Activated B cell treated with CpG ODN at 0.5 μM for 24 hours (primary cell): ENCODE measurements at regions of chr12 and their contacts with region 1.

Region 1: GRCh38 chr12:949453-950191 is at the start of gene RAD52:
- DNase-seq: peak; percentile 97
- ATAC-seq: peak; percentile 85
- H3K4me3 Mint-ChIP-seq: peak within 1 kb of the TSS; percentile 99
- H3K27ac Mint-ChIP-seq: peak within 1 kb of the TSS; percentile 96
- H3K4me1 Mint-ChIP-seq: peaks cover 26% of the 10 kb centered on the region
- H3K27me3 Mint-ChIP-seq: no peaks in the 10 kb centered on the region
- CTCF ChIP-seq: peak; percentile 65
- total RNA-seq, gene RAD52: 15.0 and 15.2 TPM in 2 replicates

Region 2: GRCh38 chr12:401235-402028 is 548.2 kb before region 1 on chr12 and contains the start of gene CCDC77:
- CTCF ChIA-PET with region 1: no interaction called
- POLR2A ChIA-PET with region 1: no interaction called
- intact Hi-C with region 1: loop called (anchors 1 kb)
- DNase-seq: peak; percentile 92
- ATAC-seq: peak; percentile 100
- H3K4me3 Mint-ChIP-seq: no peak within 1 kb of the TSS
- H3K27ac Mint-ChIP-seq: no peak within 1 kb of the TSS
- H3K4me1 Mint-ChIP-seq: no peaks in the 10 kb centered on the region
- H3K27me3 Mint-ChIP-seq: no peaks in the 10 kb centered on the region
- CTCF ChIP-seq: no peak
- total RNA-seq, gene CCDC77: 11.0 and 11.2 TPM in 2 replicates

Region 3: GRCh38 chr12:614411-614970 is 335.1 kb before region 1 on chr12:
- CTCF ChIA-PET with region 1: interaction called, 7 read pairs
- POLR2A ChIA-PET with region 1: no interaction called
- intact Hi-C with region 1: loop called (anchors 1 kb)
- DNase-seq: peak; percentile 38
- ATAC-seq: peak; percentile 73
- H3K4me3 Mint-ChIP-seq: no peak overlapping the region
- H3K27ac Mint-ChIP-seq: no peak overlapping the region
- H3K4me1 Mint-ChIP-seq: peaks cover 25% of the 10 kb centered on the region
- H3K27me3 Mint-ChIP-seq: no peaks in the 10 kb centered on the region
- CTCF ChIP-seq: no peak

Region 4: GRCh38 chr12:990661-991349 is 41.2 kb after region 1 on chr12 and contains the start of gene ERC1:
- CTCF ChIA-PET with region 1: interaction called, 4 read pairs
- POLR2A ChIA-PET with region 1: interaction called, 46 read pairs
- intact Hi-C with region 1: loop called (anchors 1 kb)
- DNase-seq: peak; percentile 94
- ATAC-seq: peak; percentile 89
- H3K4me3 Mint-ChIP-seq: peak within 1 kb of the TSS; percentile 95
- H3K27ac Mint-ChIP-seq: peak within 1 kb of the TSS; percentile 91
- H3K4me1 Mint-ChIP-seq: peaks cover 29% of the 10 kb centered on the region
- H3K27me3 Mint-ChIP-seq: no peaks in the 10 kb centered on the region
- CTCF ChIP-seq: no peak
- total RNA-seq, gene ERC1: 51.1 and 57.0 TPM in 2 replicates

Region 5: DNA sequence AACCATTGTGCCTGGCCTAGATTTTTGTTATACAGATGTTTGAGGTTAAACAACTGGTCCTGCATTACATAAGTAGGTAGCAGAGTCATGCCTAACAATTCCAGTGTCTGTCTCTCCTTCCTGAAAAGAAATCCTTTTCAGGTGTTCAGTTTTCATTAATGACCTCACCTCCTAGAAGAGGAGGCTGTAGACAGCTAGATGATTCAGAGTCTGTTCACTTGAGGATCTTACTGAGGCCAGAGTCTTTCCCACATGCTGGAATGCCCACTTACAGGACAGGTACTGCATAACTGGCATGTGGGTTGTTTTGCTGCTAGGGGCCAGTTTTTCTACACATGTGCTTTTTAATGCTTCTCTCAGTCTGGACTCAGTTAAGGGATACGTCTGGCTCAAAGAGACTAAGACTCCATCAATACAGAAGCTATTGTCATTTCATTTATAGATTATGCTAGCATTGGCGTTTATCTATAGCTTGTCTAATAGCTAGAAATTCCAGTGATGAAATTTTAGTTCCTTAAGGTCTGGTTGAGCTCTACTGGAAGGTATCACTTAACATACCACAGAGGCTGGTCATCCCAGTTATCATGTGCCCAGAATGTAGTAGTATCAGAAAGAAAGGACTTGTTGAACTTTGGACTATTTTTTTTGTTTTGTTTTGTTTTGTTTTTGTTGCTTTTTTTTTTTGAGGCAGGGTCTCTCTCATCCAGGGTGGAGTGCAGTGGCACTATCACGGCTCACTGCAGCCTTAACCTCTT is 247.8 kb after region 1 on chr12:
- CTCF ChIA-PET with region 1: no interaction called
- POLR2A ChIA-PET with region 1: no interaction called
- intact Hi-C with region 1: no loop called
- DNase-seq: no peak
- ATAC-seq: no peak
- H3K4me3 Mint-ChIP-seq: no peak overlapping the region
- H3K27ac Mint-ChIP-seq: no peak overlapping the region
- H3K4me1 Mint-ChIP-seq: peaks cover 8% of the 10 kb centered on the region
- H3K27me3 Mint-ChIP-seq: no peaks in the 10 kb centered on the region
- CTCF ChIP-seq: no peak

Region 6: GRCh38 chr12:1594261-1595025 is 644.8 kb after region 1 on chr12 and contains the start of gene FBXL14:
- CTCF ChIA-PET with region 1: no interaction called
- POLR2A ChIA-PET with region 1: interaction called, 6 read pairs
- intact Hi-C with region 1: loop called (anchors 1 kb)
- DNase-seq: peak; percentile 91
- ATAC-seq: peak; percentile 65
- H3K4me3 Mint-ChIP-seq: peak within 1 kb of the TSS; percentile 92
- H3K27ac Mint-ChIP-seq: peak within 1 kb of the TSS; percentile 92
- H3K4me1 Mint-ChIP-seq: peaks cover 52% of the 10 kb centered on the region
- H3K27me3 Mint-ChIP-seq: no peaks in the 10 kb centered on the region
- CTCF ChIP-seq: no peak
- total RNA-seq, gene FBXL14: 19.4 and 21.6 TPM in 2 replicates